B cell (primary cell): ENCODE measurements at regions of chr7 and their contacts with region 1.

Region 1: DNA sequence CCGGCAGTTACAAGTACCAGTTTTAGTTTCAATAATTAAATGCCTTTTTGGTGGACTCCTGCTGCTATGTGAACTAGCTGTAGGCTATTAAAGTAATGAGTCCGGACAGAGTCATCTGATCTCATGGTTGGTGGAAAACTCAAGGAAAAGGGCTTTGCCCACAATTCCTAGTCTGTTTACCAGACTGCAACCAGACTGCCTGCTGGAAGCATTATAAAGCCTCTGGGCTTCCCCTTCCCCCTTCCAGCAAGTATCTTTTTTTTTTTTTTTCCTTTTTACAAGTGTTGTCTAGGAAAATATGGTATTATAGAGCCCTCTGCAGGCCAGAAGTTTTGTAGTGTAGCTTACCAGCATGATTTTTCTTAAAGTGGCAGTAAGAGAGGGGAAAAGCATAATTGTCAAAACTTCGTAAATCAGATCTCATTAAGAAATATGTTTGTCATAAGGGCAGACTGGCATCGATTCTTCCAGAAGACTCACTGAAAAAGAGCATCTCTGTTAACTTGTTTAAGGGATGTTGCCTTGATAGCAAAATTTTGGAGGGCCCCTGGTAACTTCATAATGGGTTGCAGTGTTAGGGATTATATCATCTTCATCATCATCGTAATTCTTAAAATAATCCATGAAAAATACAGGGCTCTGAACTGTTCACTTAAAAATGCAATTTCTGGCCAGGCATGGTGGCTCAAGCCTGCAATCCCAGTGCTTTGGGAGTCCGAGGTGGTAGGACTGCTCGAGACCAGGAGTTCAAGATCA is 181.3 kb downstream of the TAX1BP1 start:
- DNase-seq: peak; percentile 68
- ATAC-seq: peak; percentile 60
- H3K4me3 ChIP-seq: no peak overlapping the region
- H3K4me3 Mint-ChIP-seq: no peak overlapping the region
- H3K27ac ChIP-seq: no peak overlapping the region
- H3K27ac Mint-ChIP-seq: no peak overlapping the region
- H3K4me1 ChIP-seq: peaks cover 35 to 39% of the 10 kb centered on the region in 2 donors
- H3K4me1 Mint-ChIP-seq: peaks cover 67% of the 10 kb centered on the region
- H3K27me3 ChIP-seq: no peaks in the 10 kb centered on the region
- H3K27me3 Mint-ChIP-seq: no peaks in the 10 kb centered on the region
- CTCF ChIP-seq: peak; percentile 71

Region 2: DNA sequence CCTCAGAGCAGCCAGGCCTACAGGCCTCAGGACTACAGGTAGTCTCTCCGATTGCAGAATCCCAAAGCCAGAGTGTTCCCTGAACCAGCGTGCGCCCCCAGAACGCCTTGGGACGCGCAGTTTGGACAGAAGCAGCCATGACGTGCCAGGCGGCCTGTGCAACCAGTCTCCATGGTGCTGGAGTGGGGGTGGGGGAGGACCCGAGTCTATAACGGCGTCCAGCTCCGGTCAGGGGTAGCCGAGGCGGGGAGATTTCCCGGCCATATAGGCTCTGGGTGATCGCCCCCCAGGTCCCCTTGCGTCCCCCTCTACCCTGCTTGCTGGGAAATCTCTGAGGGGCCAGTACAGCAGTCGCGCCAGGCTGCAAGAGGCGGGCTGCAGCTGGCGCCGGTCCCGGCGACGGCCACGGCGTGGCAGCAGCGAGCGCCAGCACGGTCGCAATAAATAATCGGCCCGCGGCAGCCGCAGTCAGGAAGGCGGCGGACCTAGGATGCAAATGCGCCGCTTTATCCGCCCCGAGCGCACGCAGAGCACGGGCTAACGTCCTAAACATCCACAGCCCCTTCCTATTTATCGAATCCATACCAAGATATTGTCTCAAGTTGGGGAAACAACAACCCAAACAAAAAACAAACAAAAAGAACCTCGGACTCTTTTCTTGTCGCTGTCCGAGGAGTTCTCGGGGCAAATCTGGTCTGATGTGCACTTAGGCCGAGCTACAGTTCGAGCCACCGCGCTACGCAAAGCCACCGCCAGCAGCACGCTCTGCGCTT is 770.5 kb before region 1 on chr7:
- CTCF ChIA-PET with region 1: no interaction called
- POLR2A ChIA-PET with region 1: no interaction called
- intact Hi-C with region 1: loop called (anchors 2 kb)
- DNase-seq: peak; percentile 86
- ATAC-seq: peak; percentile 86
- H3K4me3 ChIP-seq: peak overlapping the region; percentile 26 to 48 (median 34)
- H3K4me3 Mint-ChIP-seq: peak overlapping the region; percentile 83
- H3K27ac ChIP-seq: no peak overlapping the region
- H3K27ac Mint-ChIP-seq: peak overlapping the region; percentile 73
- H3K4me1 ChIP-seq: peaks cover 62 to 71% of the 10 kb centered on the region in 2 donors
- H3K4me1 Mint-ChIP-seq: peaks cover 43% of the 10 kb centered on the region
- H3K27me3 ChIP-seq: peaks cover 0 to 99% (median 85%) of the 10 kb centered on the region in 4 experiments
- H3K27me3 Mint-ChIP-seq: peaks cover 74% of the 10 kb centered on the region
- CTCF ChIP-seq: peak; percentile 88

Region 3: DNA sequence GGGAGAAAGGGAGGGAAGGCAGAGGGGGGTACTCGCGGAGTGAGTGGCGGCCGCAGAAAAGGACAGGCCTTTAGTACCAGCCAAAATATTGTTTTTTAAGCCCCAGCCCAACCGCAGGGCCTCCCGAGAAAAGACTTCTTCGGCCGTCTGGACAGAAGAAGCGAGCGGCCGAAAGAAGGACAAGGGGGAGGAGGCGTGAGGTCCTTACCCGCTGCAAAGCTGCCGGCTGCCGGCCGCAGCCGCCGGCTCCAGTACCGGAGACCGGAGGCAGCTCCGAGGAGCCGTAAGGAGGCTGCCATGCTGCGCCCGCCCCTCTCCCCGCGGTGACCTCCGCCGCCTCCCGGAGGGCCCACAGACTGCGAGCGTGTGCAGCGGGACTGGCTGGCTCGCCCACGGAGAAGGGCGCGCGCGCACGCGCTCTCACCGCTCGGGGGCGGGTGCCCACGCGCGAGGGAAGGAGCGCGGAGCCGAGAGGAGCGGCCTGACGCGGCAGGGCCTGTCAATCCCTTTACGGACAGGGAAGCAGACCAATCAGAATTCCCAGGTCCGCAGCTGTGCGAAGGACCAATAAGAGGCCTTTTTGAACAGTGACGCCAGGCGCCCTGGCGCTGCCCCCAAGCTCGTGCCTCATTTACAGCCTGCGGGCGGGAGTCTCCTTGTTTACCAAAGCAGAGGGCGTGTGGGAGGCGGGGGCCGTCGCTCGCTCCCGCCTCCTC is 258.6 kb before region 1 on chr7 and contains the start of gene HIBADH:
- CTCF ChIA-PET with region 1: interaction called, 6 read pairs
- POLR2A ChIA-PET with region 1: no interaction called
- intact Hi-C with region 1: loop called (anchors 10 kb)
- DNase-seq: peak; percentile 98
- ATAC-seq: peak; percentile 95
- H3K4me3 ChIP-seq: peak within 1 kb of the TSS; percentile 76 to 97 (median 83)
- H3K4me3 Mint-ChIP-seq: peak within 1 kb of the TSS; percentile 88
- H3K27ac ChIP-seq: peak within 1 kb of the TSS; percentile 55 to 74
- H3K27ac Mint-ChIP-seq: peak within 1 kb of the TSS; percentile 92
- H3K4me1 ChIP-seq: peaks cover 10 to 12% of the 10 kb centered on the region in 2 donors
- H3K4me1 Mint-ChIP-seq: peaks cover 6% of the 10 kb centered on the region
- H3K27me3 ChIP-seq: no peaks in the 10 kb centered on the region
- H3K27me3 Mint-ChIP-seq: no peaks in the 10 kb centered on the region
- CTCF ChIP-seq: peak; percentile 15
- total RNA-seq, gene HIBADH: 14.1 and 15.0 TPM in 2 replicates

Region 4: DNA sequence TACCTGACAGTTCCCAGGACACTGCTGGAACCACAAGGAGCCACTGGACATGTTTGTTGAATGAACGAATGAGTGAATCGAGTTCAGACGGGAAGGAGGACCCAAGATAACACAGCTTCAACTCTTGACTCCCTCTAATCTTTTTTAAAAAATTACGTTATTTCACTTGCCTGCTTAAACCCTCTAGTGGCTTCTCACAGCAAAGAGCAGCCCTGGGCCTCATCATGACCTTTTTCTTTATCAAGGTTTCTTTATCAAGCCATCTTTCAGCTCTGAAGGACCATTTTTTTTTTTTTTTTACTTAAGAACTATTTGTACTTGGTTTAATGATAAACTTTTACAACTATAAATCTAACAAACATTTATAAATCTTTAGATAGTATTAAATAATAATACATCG is 70.7 kb before region 1 on chr7:
- CTCF ChIA-PET with region 1: no interaction called
- POLR2A ChIA-PET with region 1: no interaction called
- intact Hi-C with region 1: loop called (anchors 5 kb)
- DNase-seq: no peak
- ATAC-seq: no peak
- H3K4me3 ChIP-seq: no peak overlapping the region
- H3K4me3 Mint-ChIP-seq: no peak overlapping the region
- H3K27ac ChIP-seq: no peak overlapping the region
- H3K27ac Mint-ChIP-seq: no peak overlapping the region
- H3K4me1 ChIP-seq: no peaks in the 10 kb centered on the region
- H3K4me1 Mint-ChIP-seq: no peaks in the 10 kb centered on the region
- H3K27me3 ChIP-seq: no peaks in the 10 kb centered on the region
- H3K27me3 Mint-ChIP-seq: no peaks in the 10 kb centered on the region
- CTCF ChIP-seq: no peak

Region 5: DNA sequence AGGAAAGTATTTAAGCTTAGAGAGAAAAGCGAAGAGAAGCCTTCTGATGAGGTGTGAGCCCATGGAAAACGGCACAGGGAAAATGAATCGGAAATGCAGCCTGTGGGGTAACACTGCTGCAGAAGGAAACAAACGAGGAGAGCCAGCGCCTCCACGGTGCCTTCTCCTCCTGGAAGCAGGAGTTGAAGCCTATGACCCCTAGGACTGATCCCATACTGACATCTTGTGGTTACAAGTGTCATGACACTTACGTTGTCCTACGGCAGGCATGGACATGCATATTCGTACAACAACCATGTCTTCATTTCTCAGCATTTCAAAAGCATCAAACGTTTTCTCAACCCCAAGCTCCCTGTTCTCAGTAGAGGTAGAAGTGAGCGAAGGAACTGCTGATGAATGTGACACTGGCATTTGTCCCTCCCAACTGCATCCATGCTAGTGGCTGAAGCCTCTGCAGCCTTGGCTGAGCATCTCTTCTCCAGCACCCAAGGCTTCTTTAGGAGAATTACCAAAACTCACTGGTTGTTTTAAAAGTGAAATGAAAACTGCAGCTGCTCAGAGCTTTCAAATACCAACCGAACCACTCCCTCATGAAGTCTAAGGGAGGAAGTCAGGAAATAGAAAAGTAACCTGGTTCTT is 99.2 kb after region 1 on chr7:
- CTCF ChIA-PET with region 1: interaction called, 4 read pairs
- POLR2A ChIA-PET with region 1: no interaction called
- intact Hi-C with region 1: loop called (anchors 1 kb)
- DNase-seq: peak; percentile 62
- ATAC-seq: peak; percentile 69
- H3K4me3 ChIP-seq: no peak overlapping the region
- H3K4me3 Mint-ChIP-seq: no peak overlapping the region
- H3K27ac ChIP-seq: no peak overlapping the region
- H3K27ac Mint-ChIP-seq: no peak overlapping the region
- H3K4me1 ChIP-seq: no peaks in the 10 kb centered on the region
- H3K4me1 Mint-ChIP-seq: peaks cover 26% of the 10 kb centered on the region
- H3K27me3 ChIP-seq: no peaks in the 10 kb centered on the region
- H3K27me3 Mint-ChIP-seq: no peaks in the 10 kb centered on the region
- CTCF ChIP-seq: peak; percentile 83

Region 6: GRCh38 chr7:28155019-28155660 is 233.9 kb after region 1 on chr7:
- CTCF ChIA-PET with region 1: no interaction called
- POLR2A ChIA-PET with region 1: no interaction called
- intact Hi-C with region 1: no loop called
- DNase-seq: peak; percentile 79
- ATAC-seq: peak; percentile 78
- H3K4me3 ChIP-seq: peak overlapping the region in 4 of 5 experiments; percentile 23 to 58 (median 36)
- H3K4me3 Mint-ChIP-seq: peak overlapping the region; percentile 59
- H3K27ac ChIP-seq: peak overlapping the region; percentile 71 to 74
- H3K27ac Mint-ChIP-seq: peak overlapping the region; percentile 84
- H3K4me1 ChIP-seq: peaks cover 89 to 98% of the 10 kb centered on the region in 2 donors
- H3K4me1 Mint-ChIP-seq: peaks cover 88% of the 10 kb centered on the region
- H3K27me3 ChIP-seq: no peaks in the 10 kb centered on the region
- H3K27me3 Mint-ChIP-seq: no peaks in the 10 kb centered on the region
- CTCF ChIP-seq: no peak